Activated B cell treated with CpG ODN at 0.5 μM for 24 hours (primary cell): ENCODE measurements at regions of chr9 and their contacts with region 1.

Region 1: GRCh38 chr9:128007566-128008138 is 26.9 kb upstream of the EEIG1 start:
- DNase-seq: peak; percentile 51
- ATAC-seq: peak; percentile 78
- H3K4me3 Mint-ChIP-seq: peak overlapping the region; percentile 49
- H3K27ac Mint-ChIP-seq: peak overlapping the region; percentile 94
- H3K4me1 Mint-ChIP-seq: peaks cover 72% of the 10 kb centered on the region
- H3K27me3 Mint-ChIP-seq: no peaks in the 10 kb centered on the region
- CTCF ChIP-seq: no peak

Region 2: GRCh38 chr9:127987103-127987614 is 20.5 kb before region 1 on chr9:
- CTCF ChIA-PET with region 1: no interaction called
- POLR2A ChIA-PET with region 1: interaction called, 28 read pairs
- intact Hi-C with region 1: no loop called
- DNase-seq: no peak
- ATAC-seq: peak; percentile 35
- H3K4me3 Mint-ChIP-seq: peak overlapping the region; percentile 36
- H3K27ac Mint-ChIP-seq: peak overlapping the region; percentile 85
- H3K4me1 Mint-ChIP-seq: peaks cover 65% of the 10 kb centered on the region
- H3K27me3 Mint-ChIP-seq: no peaks in the 10 kb centered on the region
- CTCF ChIP-seq: no peak